BJ (cell line): ENCODE measurements at regions of chr9 and their contacts with region 1.

Region 1: DNA sequence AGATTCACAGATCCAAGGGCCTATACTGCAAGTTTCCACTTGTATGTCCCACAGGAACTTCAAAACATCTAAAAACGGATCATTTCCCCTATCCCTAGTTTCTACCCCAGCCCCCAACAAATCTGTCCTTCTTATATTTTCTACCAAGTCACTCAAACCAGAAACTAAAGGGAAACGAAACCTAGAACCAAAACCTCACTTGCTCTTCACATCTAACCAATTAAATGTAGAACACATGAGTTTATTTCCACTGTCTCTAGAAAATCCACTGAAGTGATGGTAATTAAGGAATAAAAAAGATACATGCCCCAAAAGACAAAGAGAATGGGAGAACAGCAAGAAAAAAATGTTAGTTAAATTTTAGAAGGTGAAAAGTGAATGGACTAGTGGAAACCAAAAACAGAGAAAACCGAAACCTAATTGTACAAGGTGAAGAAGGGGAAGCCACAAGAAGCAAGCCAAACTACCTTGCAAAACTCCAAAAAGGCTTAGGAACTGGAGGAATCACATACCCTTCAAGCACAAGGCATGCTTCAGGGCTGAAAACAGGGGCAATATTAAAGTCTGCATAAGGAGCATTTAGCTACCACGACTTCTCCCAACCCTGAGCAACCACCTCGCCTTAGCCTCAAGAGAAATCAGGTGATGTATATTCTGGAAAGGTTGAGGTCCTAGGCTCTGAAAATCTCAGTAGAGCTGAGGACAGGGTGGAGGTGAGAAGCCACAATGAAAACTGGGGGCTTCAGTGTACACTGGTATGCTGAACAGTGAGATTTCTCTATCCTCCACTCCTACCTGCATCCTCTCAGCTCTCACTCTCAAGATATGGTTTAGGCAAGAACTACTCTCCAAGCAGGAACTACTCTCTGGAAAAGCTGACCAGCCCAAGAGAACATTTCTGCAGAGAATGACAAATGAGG is 11.1 kb downstream of the SMU1 start:
- DNase-seq: no peak
- H3K4me3 ChIP-seq: no peak overlapping the region
- H3K27me3 ChIP-seq: no peaks in the 10 kb centered on the region
- CTCF ChIP-seq: no peak

Region 2: DNA sequence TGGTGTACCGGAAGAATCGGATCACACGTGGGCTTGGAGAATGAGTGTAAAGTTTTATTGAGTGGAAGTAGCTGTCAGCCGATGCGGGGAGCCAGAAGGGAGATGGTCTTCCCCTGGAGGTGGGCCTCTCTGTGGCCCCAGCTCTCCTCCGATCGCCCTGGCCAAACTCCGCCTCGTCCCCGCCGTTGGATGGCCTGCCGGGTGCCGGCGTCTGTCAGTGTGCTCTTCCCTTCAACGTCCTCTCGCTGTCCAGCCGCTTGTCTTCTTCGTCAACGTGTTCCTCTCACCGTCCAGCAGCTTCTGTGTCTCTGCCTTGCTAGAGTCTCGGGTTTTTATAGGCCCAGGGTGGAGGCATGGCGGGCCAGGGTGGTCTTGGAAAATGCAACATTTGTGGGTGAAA is 309.7 kb before region 1 on chr9:
- CTCF ChIA-PET with region 1: no interaction called
- POLR2A ChIA-PET with region 1: no interaction called
- DNase-seq: no peak
- H3K4me3 ChIP-seq: no peak overlapping the region
- H3K27me3 ChIP-seq: no peaks in the 10 kb centered on the region
- CTCF ChIP-seq: no peak

Region 3: GRCh38 chr9:33076358-33077004 is 11.1 kb after region 1 on chr9 and contains the start of gene SMU1:
- CTCF ChIA-PET with region 1: no interaction called
- POLR2A ChIA-PET with region 1: interaction called, 13 read pairs
- DNase-seq: peak; percentile 89
- H3K4me3 ChIP-seq: peak within 1 kb of the TSS; percentile 61
- H3K27me3 ChIP-seq: no peaks in the 10 kb centered on the region
- CTCF ChIP-seq: no peak
- polyA plus RNA-seq, gene SMU1: 9.9 and 16.7 TPM in 2 replicates

Region 4: DNA sequence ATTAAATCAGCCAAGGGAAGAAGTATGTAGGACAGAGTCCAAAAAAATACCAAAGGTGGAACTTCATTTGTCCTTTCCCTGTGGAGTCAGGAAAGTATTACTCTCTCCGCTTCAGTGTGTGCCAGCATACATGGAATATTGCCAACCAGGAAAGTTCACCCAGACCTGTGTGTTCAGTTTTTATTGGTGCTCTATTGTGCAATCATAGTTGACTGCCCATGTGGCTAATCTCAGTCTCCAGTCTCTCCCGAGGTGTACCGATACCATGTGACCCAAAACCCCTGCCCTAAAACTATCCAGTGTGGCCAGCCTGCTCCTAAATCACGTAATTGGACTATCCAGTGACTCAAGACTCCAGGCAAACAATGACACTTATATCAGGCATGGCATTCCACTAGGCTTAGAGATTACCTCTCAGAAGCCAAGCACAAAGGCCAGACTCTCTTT is 263.7 kb after region 1 on chr9:
- CTCF ChIA-PET with region 1: no interaction called
- POLR2A ChIA-PET with region 1: no interaction called
- DNase-seq: peak; percentile 91
- H3K4me3 ChIP-seq: no peak overlapping the region
- H3K27me3 ChIP-seq: no peaks in the 10 kb centered on the region
- CTCF ChIP-seq: no peak